T-cell (primary cell): ENCODE measurements at regions of chr1 and their contacts with region 1.

Region 1: DNA sequence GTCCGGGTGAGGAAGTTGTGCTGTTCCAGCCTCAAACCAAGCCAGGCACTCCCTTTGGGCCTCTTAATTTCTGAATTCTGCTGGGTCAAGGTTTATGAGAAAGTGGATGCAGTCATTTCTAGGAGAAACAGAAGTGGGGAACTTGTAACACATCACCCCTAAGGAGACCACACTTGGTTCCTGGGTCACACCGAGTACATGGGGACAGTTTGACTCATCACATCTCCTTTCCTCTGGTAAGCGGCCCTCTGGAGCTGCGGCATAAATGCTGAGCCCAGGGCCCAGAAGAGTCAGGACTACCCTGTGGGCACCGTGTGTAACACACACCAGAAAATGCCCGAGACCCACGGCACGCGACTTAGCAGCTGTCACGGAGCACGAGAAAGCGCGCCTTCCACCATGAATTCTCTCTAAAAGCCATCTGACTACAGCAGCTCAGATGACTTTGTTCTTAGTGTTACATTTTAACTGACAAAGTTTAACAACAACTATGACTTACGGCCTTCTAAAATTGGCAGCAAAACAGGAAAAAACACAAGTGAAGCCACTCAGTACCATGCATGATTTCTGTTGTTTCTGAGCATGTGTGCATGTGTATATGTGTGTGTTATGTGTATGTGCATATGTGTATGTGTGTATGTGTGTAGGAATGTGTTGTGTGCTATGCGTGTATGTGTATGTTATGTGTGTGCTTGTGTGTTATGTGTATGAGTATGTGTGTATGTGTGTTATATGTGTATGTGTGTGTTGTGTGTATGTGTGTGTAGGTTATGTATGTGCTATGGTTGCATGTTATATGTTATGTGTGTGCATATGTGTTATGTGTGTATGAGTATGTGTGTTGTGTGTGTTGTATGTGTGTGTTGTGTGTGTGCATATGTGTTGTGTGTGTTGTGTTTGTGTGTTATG is 50.8 kb downstream of the TOMM20 start:
- DNase-seq: no peak
- ATAC-seq: no peak
- H3K4me3 ChIP-seq: no peak overlapping the region
- H3K4me3 Mint-ChIP-seq: no peak overlapping the region
- H3K27ac ChIP-seq: no peak overlapping the region
- H3K27ac Mint-ChIP-seq: peak overlapping the region; percentile 11 to 22
- H3K4me1 ChIP-seq: peaks cover 0 to 25% of the 10 kb centered on the region in 2 experiments
- H3K4me1 Mint-ChIP-seq: peaks cover 7 to 32% (median 20%) of the 10 kb centered on the region in 3 donors
- H3K27me3 ChIP-seq: no peaks in the 10 kb centered on the region
- H3K27me3 Mint-ChIP-seq: no peaks in the 10 kb centered on the region

Region 2: DNA sequence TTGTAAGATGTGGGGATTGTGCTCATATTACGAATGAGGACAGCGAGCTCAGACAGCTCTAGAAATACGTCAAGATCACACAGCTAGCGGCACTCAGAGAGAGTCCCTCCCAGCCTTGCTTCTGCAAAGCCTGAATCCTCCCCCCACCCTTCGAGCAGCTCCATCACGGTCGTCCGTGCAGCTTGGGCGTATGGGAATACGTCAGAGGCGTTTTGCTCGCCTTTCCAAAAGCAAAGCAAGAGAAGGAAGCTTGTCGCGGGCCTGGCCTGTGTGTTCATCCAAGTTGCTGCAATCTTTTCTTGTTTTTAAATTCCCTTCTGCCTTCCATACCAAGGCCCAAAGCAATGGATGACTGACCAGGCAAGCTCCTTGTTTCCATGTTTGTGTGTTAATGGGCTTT is 342.3 kb before region 1 on chr1:
- CTCF ChIA-PET with region 1: no interaction called
- POLR2A ChIA-PET with region 1: interaction called in 1 of 2 experiments, 10 read pairs
- DNase-seq: no peak
- ATAC-seq: no peak
- H3K4me3 ChIP-seq: no peak overlapping the region
- H3K4me3 Mint-ChIP-seq: no peak overlapping the region
- H3K27ac ChIP-seq: no peak overlapping the region
- H3K27ac Mint-ChIP-seq: no peak overlapping the region
- H3K4me1 ChIP-seq: peaks cover 18 to 31% of the 10 kb centered on the region in 2 experiments
- H3K4me1 Mint-ChIP-seq: peaks cover 23 to 36% (median 24%) of the 10 kb centered on the region in 3 donors
- H3K27me3 ChIP-seq: no peaks in the 10 kb centered on the region
- H3K27me3 Mint-ChIP-seq: no peaks in the 10 kb centered on the region

Region 3: DNA sequence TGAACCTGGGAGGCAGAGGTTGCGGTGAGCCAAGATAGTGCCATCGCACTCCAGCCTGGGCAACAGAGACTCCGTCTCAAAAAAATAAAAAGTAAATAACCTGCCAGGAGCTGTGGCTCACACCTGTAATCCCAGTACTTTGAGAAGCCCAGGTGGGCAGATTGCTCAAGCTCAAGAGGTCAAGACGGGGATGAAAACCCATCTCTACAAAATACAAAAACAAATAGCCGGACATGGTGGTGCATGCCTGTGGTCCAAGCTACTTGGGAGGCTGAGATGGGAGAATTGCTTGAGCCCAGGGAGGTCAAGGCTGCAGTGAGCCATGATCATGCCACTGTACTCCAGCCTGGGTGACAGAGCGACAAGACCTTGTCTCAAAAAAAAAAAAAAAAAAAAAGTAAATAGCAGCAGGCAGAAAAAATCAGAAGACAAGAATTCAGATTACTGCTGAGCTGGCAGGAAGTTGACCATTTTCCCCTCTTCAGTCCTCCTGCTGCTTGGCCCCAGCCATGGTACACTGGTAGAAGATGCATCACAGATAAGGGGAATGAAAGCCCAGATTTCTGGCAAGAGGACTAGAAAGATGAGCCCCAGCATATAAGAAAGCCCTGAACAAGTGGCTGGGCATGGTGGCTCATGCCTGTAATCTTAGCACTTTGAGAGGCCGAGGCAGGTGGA is 46.8 kb before region 1 on chr1:
- CTCF ChIA-PET with region 1: no interaction called
- POLR2A ChIA-PET with region 1: no interaction called
- DNase-seq: no peak
- ATAC-seq: no peak
- H3K4me3 ChIP-seq: no peak overlapping the region
- H3K4me3 Mint-ChIP-seq: no peak overlapping the region
- H3K27ac ChIP-seq: no peak overlapping the region
- H3K27ac Mint-ChIP-seq: no peak overlapping the region
- H3K4me1 ChIP-seq: peaks cover 0 to 4% of the 10 kb centered on the region in 2 experiments
- H3K4me1 Mint-ChIP-seq: peaks cover 0 to 4% (median 1%) of the 10 kb centered on the region in 3 donors
- H3K27me3 ChIP-seq: no peaks in the 10 kb centered on the region
- H3K27me3 Mint-ChIP-seq: no peaks in the 10 kb centered on the region